ENCODE measurements at regions of chr2 and their contacts with region 1.

Region 1: GRCh38 chr2:42828487-42829425 is 36.4 kb upstream of the HAAO start:
- DNase-seq: peak; percentile 58
- H3K4me3 ChIP-seq: no peak overlapping the region
- H3K27ac ChIP-seq: no peak overlapping the region
- H3K4me1 ChIP-seq: peaks cover 18% of the 10 kb centered on the region
- H3K27me3 ChIP-seq: no peaks in the 10 kb centered on the region
- CTCF ChIP-seq: peak; percentile 90

Region 2: GRCh38 chr2:41859615-41860520 is 968.9 kb before region 1 on chr2:
- CTCF ChIA-PET with region 1: no interaction called
- dilution Hi-C with region 1: no loop called
- in situ Hi-C with region 1: no loop called
- intact Hi-C with region 1: no loop called
- DNase-seq: peak; percentile 60
- H3K4me3 ChIP-seq: no peak overlapping the region
- H3K27ac ChIP-seq: peak overlapping the region; percentile 36
- H3K4me1 ChIP-seq: peaks cover 5% of the 10 kb centered on the region
- H3K27me3 ChIP-seq: no peaks in the 10 kb centered on the region
- CTCF ChIP-seq: no peak

Region 3: GRCh38 chr2:42494355-42495233 is 334.2 kb before region 1 on chr2:
- CTCF ChIA-PET with region 1: no interaction called
- dilution Hi-C with region 1: no loop called
- in situ Hi-C with region 1: no loop called
- intact Hi-C with region 1: loop called (anchors 1 kb)
- DNase-seq: peak; percentile 87
- H3K4me3 ChIP-seq: peak overlapping the region; percentile 49 to 62 (median 50)
- H3K27ac ChIP-seq: no peak overlapping the region
- H3K4me1 ChIP-seq: peaks cover 13% of the 10 kb centered on the region
- H3K27me3 ChIP-seq: peaks cover 29% of the 10 kb centered on the region
- CTCF ChIP-seq: peak; percentile 87 to 91

Region 4: DNA sequence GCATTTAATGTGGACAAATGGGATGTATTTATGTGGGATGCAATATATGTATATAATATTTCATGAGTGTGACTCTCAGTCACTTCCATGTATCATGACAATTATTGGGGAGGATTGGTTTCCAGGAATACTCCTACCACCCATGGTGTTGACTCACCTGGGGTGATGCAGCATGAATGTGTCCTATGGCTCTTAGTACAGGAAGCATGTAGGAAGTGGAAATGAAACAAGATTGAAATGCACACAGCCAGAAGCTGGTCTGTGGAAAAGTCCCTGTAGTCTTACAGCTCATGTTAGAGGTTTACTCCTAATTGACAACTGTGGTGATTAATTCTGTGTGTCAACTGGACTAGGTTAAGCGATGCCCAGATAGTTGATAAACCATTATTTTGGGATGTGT is 53.0 kb after region 1 on chr2:
- CTCF ChIA-PET with region 1: no interaction called
- dilution Hi-C with region 1: loop called (anchors 5 kb)
- in situ Hi-C with region 1: no loop called
- intact Hi-C with region 1: no loop called
- DNase-seq: peak; percentile 93
- H3K4me3 ChIP-seq: no peak overlapping the region
- H3K27ac ChIP-seq: peak overlapping the region; percentile 20
- H3K4me1 ChIP-seq: peaks cover 40% of the 10 kb centered on the region
- H3K27me3 ChIP-seq: no peaks in the 10 kb centered on the region
- CTCF ChIP-seq: no peak

Region 5: GRCh38 chr2:43024515-43025011 is 195.8 kb after region 1 on chr2:
- CTCF ChIA-PET with region 1: no interaction called
- dilution Hi-C with region 1: loop called (anchors 10 kb)
- in situ Hi-C with region 1: no loop called
- intact Hi-C with region 1: loop called (anchors 1 kb)
- DNase-seq: no peak
- H3K4me3 ChIP-seq: no peak overlapping the region
- H3K27ac ChIP-seq: no peak overlapping the region
- H3K4me1 ChIP-seq: peaks cover 18% of the 10 kb centered on the region
- H3K27me3 ChIP-seq: no peaks in the 10 kb centered on the region
- CTCF ChIP-seq: peak; percentile 63 to 87

Region 6: DNA sequence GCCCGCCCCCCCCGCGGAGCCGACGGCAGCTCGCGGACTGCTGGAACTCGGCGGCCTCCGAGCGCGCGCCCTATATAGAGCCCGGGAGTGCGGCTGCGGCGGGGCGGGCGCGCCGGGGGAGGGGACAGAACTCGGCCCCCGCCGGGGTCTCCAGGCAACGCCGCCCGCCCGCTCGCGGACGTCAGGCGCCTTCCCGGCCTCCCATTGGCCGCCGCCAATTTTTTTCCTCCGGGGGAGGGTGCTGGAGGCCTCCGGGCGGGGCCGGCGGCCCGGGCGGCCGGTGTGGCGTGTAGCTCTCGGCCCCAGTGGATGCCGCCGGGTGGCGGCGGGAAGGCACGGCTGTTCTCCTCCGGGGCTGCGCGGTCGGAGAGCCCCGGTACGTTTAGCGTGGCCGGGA is 397.8 kb after region 1 on chr2 and contains the start of gene ZFP36L2:
- CTCF ChIA-PET with region 1: no interaction called
- dilution Hi-C with region 1: loop called (anchors 5 kb)
- in situ Hi-C with region 1: loop called in 1 of 2 experiments (anchors 5 kb)
- intact Hi-C with region 1: loop called (anchors 1 kb)
- DNase-seq: peak; percentile 95
- H3K4me3 ChIP-seq: peak within 1 kb of the TSS; percentile 83 to 88 (median 86)
- H3K27ac ChIP-seq: peak within 1 kb of the TSS; percentile 88
- H3K4me1 ChIP-seq: peaks cover 29% of the 10 kb centered on the region
- H3K27me3 ChIP-seq: no peaks in the 10 kb centered on the region
- CTCF ChIP-seq: no peak
- total RNA-seq, gene ZFP36L2: 26.3 to 213 TPM

Region 7: GRCh38 chr2:43542285-43542937 is 713.7 kb after region 1 on chr2:
- CTCF ChIA-PET with region 1: no interaction called
- dilution Hi-C with region 1: no loop called
- in situ Hi-C with region 1: no loop called
- intact Hi-C with region 1: loop called (anchors 1 kb)
- DNase-seq: peak; percentile 23
- H3K4me3 ChIP-seq: no peak overlapping the region
- H3K27ac ChIP-seq: no peak overlapping the region
- H3K4me1 ChIP-seq: peaks cover 30% of the 10 kb centered on the region
- H3K27me3 ChIP-seq: no peaks in the 10 kb centered on the region
- CTCF ChIP-seq: peak; percentile 40

Region 8: GRCh38 chr2:43576981-43577892 is 748.5 kb after region 1 on chr2:
- CTCF ChIA-PET with region 1: no interaction called
- dilution Hi-C with region 1: no loop called
- in situ Hi-C with region 1: loop called (anchors 25 kb)
- intact Hi-C with region 1: loop called (anchors 1 kb)
- DNase-seq: peak; percentile 27
- H3K4me3 ChIP-seq: no peak overlapping the region
- H3K27ac ChIP-seq: no peak overlapping the region
- H3K4me1 ChIP-seq: peaks cover 3% of the 10 kb centered on the region
- H3K27me3 ChIP-seq: no peaks in the 10 kb centered on the region
- CTCF ChIP-seq: peak; percentile 77 to 84

Measured in mammary epithelial cell (primary cell).